ENCODE measurements at regions of chr20 and their contacts with region 1.

Region 1: GRCh38 chr20:63272584-63273579 is at the start of gene ARFGAP1:
- DNase-seq: peak; percentile 84 to 89 (median 87)
- H3K4me3 ChIP-seq: peak within 1 kb of the TSS; percentile 68 to 84
- H3K4me3 Mint-ChIP-seq: peak within 1 kb of the TSS; percentile 88 to 92 (median 91)
- H3K27ac ChIP-seq: peak within 1 kb of the TSS; percentile 76
- H3K27ac Mint-ChIP-seq: peak within 1 kb of the TSS; percentile 85 to 94 (median 93)
- H3K4me1 ChIP-seq: peaks cover 30% of the 10 kb centered on the region
- H3K4me1 Mint-ChIP-seq: peaks cover 16 to 41% (median 24%) of the 10 kb centered on the region in 4 donors
- H3K27me3 ChIP-seq: no peaks in the 10 kb centered on the region
- H3K27me3 Mint-ChIP-seq: peaks cover 0 to under 1% of the 10 kb centered on the region in 2 donors
- total RNA-seq, gene ARFGAP1: 113 to 120 TPM

Region 2: GRCh38 chr20:63216041-63216848 is 56.6 kb before region 1 on chr20 and contains the start of gene YTHDF1:
- CTCF ChIA-PET with region 1: no interaction called
- POLR2A ChIA-PET with region 1: interaction called, 11 read pairs
- intact Hi-C with region 1: loop called (anchors 1 kb)
- DNase-seq: peak; percentile 95 to 97 (median 96)
- H3K4me3 ChIP-seq: peak within 1 kb of the TSS; percentile 78 to 80
- H3K4me3 Mint-ChIP-seq: peak within 1 kb of the TSS; percentile 88 to 97 (median 90)
- H3K27ac ChIP-seq: peak within 1 kb of the TSS; percentile 74
- H3K27ac Mint-ChIP-seq: peak within 1 kb of the TSS; percentile 91 to 96 (median 95)
- H3K4me1 ChIP-seq: peaks cover 48% of the 10 kb centered on the region
- H3K4me1 Mint-ChIP-seq: peaks cover 30 to 50% (median 42%) of the 10 kb centered on the region in 4 donors
- H3K27me3 ChIP-seq: no peaks in the 10 kb centered on the region
- H3K27me3 Mint-ChIP-seq: peaks cover 0 to 6% of the 10 kb centered on the region in 2 donors
- total RNA-seq, gene YTHDF1: 47.7 to 48.1 TPM

Region 3: DNA sequence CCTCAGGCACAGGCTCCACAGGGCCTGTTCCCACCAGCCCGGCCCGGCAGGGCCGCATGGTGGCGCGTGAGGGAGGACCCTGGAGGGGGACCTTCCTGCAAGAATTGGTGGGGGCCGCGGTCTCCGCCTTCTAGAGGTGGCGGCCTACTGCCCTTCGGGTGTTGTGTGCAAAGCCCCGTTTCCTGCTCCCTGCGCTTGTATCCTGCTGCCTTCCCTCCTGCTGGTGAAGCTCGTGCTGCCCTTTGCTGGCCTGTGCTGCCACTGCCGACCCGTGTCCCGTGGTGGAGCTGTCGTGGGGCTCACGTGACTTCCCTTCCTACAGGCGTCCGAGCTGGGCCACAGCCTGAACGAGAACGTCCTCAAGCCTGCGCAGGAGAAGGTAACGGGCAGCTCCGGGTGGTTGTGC is 11.7 kb after region 1 on chr20:
- CTCF ChIA-PET with region 1: no interaction called
- POLR2A ChIA-PET with region 1: interaction called, 15 read pairs
- intact Hi-C with region 1: no loop called
- DNase-seq: peak in 1 of 5 donors; percentile 20
- H3K4me3 ChIP-seq: peak overlapping the region in 1 of 2 donors; percentile 18
- H3K4me3 Mint-ChIP-seq: peak overlapping the region; percentile 71 to 86 (median 83)
- H3K27ac ChIP-seq: peak overlapping the region; percentile 9
- H3K27ac Mint-ChIP-seq: peak overlapping the region in 4 of 7 donors; percentile 22 to 62 (median 49)
- H3K4me1 ChIP-seq: no peaks in the 10 kb centered on the region
- H3K4me1 Mint-ChIP-seq: peaks cover 0 to 15% (median 2%) of the 10 kb centered on the region in 4 donors
- H3K27me3 ChIP-seq: no peaks in the 10 kb centered on the region
- H3K27me3 Mint-ChIP-seq: no peaks in the 10 kb centered on the region

Measured in CD4-positive, alpha-beta memory T cell (primary cell).